Natural killer cell (primary cell): ENCODE measurements at regions of chr1 and their contacts with region 1.

Region 1: GRCh38 chr1:160006312-160006940 is 25.4 kb downstream of the PIGM start:
- DNase-seq: peak; percentile 55 to 86
- ATAC-seq: peak; percentile 75 to 84 (median 83)
- H3K4me3 ChIP-seq: no peak overlapping the region
- H3K4me3 Mint-ChIP-seq: no peak overlapping the region
- H3K27ac ChIP-seq: no peak overlapping the region
- H3K27ac Mint-ChIP-seq: no peak overlapping the region
- H3K4me1 ChIP-seq: no peaks in the 10 kb centered on the region
- H3K4me1 Mint-ChIP-seq: no peaks in the 10 kb centered on the region
- H3K27me3 ChIP-seq: no peaks in the 10 kb centered on the region
- H3K27me3 Mint-ChIP-seq: peaks cover 8 to 9% of the 10 kb centered on the region in 2 donors
- CTCF ChIP-seq: peak; percentile 75

Region 2: GRCh38 chr1:159132271-159132881 is 874.0 kb before region 1 on chr1:
- intact Hi-C with region 1: loop called (anchors 5 kb)
- DNase-seq: peak; percentile 54 to 74
- ATAC-seq: peak; percentile 62 to 67 (median 63)
- H3K4me3 ChIP-seq: no peak overlapping the region
- H3K4me3 Mint-ChIP-seq: no peak overlapping the region
- H3K27ac ChIP-seq: no peak overlapping the region
- H3K27ac Mint-ChIP-seq: no peak overlapping the region
- H3K4me1 ChIP-seq: no peaks in the 10 kb centered on the region
- H3K4me1 Mint-ChIP-seq: no peaks in the 10 kb centered on the region
- H3K27me3 ChIP-seq: peaks cover 2% of the 10 kb centered on the region
- H3K27me3 Mint-ChIP-seq: peaks cover 0 to 2% of the 10 kb centered on the region in 2 donors
- CTCF ChIP-seq: peak; percentile 83

Region 3: DNA sequence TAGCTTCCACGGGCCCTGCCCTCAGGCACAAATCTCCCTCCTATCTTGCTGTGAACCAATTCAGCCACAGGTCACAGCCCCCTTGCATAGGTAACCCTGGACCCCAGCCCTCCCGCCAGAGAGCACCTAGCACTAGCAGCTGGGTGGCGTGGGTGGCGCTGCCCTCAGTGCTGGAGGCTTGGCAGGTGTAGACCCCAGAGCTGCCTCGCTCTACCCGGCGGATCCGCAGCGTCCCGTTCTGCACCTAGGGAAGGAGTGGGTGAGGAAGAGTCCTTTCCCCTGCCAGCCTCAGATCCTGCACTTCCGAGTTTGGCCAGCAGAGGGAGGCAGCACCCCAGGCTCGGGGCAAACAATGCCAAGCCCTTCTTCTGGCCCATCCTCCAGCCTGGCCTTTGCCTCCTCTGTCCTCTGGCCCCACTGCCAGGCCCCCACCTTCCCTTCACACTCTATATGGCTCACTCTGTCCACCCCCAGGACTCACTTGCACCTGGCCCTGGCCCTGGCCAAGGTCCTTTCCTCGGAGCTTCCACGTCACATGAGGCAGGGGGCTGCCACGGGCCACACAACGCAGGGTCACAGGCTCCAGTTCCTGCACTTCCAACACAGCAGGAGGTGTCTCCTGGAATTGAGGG is 70.0 kb before region 1 on chr1:
- intact Hi-C with region 1: loop called (anchors 1 kb)
- DNase-seq: peak; percentile 83 to 89
- ATAC-seq: peak; percentile 80 to 99 (median 94)
- H3K4me3 ChIP-seq: no peak overlapping the region
- H3K4me3 Mint-ChIP-seq: no peak overlapping the region
- H3K27ac ChIP-seq: no peak overlapping the region
- H3K27ac Mint-ChIP-seq: no peak overlapping the region
- H3K4me1 ChIP-seq: peaks cover 24% of the 10 kb centered on the region
- H3K4me1 Mint-ChIP-seq: peaks cover 0 to 7% of the 10 kb centered on the region in 2 donors
- H3K27me3 ChIP-seq: no peaks in the 10 kb centered on the region
- H3K27me3 Mint-ChIP-seq: peaks cover 20 to 22% of the 10 kb centered on the region in 2 donors
- CTCF ChIP-seq: peak; percentile 97